CD4-positive, alpha-beta T cell (primary cell): ENCODE measurements at regions of chr3 and their contacts with region 1.

Region 1: GRCh38 chr3:114213627-114214541 is 23.5 kb downstream of the ZNF80 start:
- DNase-seq: peak; percentile 53 to 91 (median 64)
- ATAC-seq: peak; percentile 51
- H3K4me3 ChIP-seq: peak overlapping the region; percentile 59
- H3K4me3 Mint-ChIP-seq: no peak overlapping the region
- H3K27ac ChIP-seq: peak overlapping the region; percentile 93 to 94
- H3K27ac Mint-ChIP-seq: no peak overlapping the region
- H3K4me1 ChIP-seq: peaks cover 70% of the 10 kb centered on the region
- H3K4me1 Mint-ChIP-seq: no peaks in the 10 kb centered on the region
- H3K27me3 ChIP-seq: no peaks in the 10 kb centered on the region
- H3K27me3 Mint-ChIP-seq: no peaks in the 10 kb centered on the region
- CTCF ChIP-seq: peak; percentile 5

Region 2: GRCh38 chr3:114005481-114005880 is 208.4 kb before region 1 on chr3:
- CTCF ChIA-PET with region 1: no interaction called
- POLR2A ChIA-PET with region 1: no interaction called
- intact Hi-C with region 1: no loop called
- DNase-seq: peak in 2 of 14 experiments; percentile 8 to 15
- ATAC-seq: no peak
- H3K4me3 ChIP-seq: no peak overlapping the region
- H3K4me3 Mint-ChIP-seq: no peak overlapping the region
- H3K27ac ChIP-seq: no peak overlapping the region
- H3K27ac Mint-ChIP-seq: no peak overlapping the region
- H3K4me1 ChIP-seq: no peaks in the 10 kb centered on the region
- H3K4me1 Mint-ChIP-seq: no peaks in the 10 kb centered on the region
- H3K27me3 ChIP-seq: no peaks in the 10 kb centered on the region
- H3K27me3 Mint-ChIP-seq: no peaks in the 10 kb centered on the region
- CTCF ChIP-seq: no peak

Region 3: GRCh38 chr3:114056130-114057010 is 157.5 kb before region 1 on chr3 and contains the starts of genes CCDC191 and QTRT2:
- CTCF ChIA-PET with region 1: interaction called, 6 read pairs
- POLR2A ChIA-PET with region 1: no interaction called
- intact Hi-C with region 1: loop called in 1 of 2 experiments (anchors 10 kb)
- DNase-seq: peak; percentile 93 to 100 (median 97)
- ATAC-seq: peak; percentile 95
- H3K4me3 ChIP-seq: peak within 1 kb of the TSS; percentile 88
- H3K4me3 Mint-ChIP-seq: peak within 1 kb of the TSS; percentile 95
- H3K27ac ChIP-seq: peak within 1 kb of the TSS; percentile 87 to 96
- H3K27ac Mint-ChIP-seq: peak within 1 kb of the TSS; percentile 94
- H3K4me1 ChIP-seq: peaks cover 18% of the 10 kb centered on the region
- H3K4me1 Mint-ChIP-seq: peaks cover 53% of the 10 kb centered on the region
- H3K27me3 ChIP-seq: no peaks in the 10 kb centered on the region
- H3K27me3 Mint-ChIP-seq: no peaks in the 10 kb centered on the region
- CTCF ChIP-seq: no peak
- total RNA-seq, gene CCDC191: 3.6 to 3.7 TPM
- total RNA-seq, gene QTRT2: 22.8 to 27.0 TPM

Region 4: DNA sequence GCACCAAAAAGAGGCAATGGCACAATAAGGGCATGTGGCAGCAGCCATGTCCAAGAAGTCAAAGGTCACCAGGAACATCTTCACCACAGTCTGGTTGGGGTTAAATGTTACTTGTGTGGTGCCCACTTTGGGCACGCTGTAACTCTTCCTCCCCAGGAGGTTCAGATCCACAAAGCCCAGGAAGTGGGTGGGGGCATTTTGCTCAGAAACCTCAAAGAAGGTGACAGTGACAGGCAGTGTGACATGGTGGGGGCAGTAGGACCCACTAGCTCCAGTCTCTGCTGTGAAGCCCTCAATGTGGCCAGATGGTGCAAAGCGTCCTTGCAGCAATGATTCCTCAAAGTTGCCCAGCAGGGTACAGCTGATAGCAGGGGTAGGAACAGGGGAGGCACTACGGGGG is 17.7 kb after region 1 on chr3:
- CTCF ChIA-PET with region 1: interaction called, 7 read pairs
- POLR2A ChIA-PET with region 1: interaction called, 72 read pairs
- intact Hi-C with region 1: loop called in 1 of 2 experiments (anchors 2 kb)
- DNase-seq: peak in 11 of 14 experiments; percentile 20 to 89 (median 42)
- ATAC-seq: peak; percentile 89
- H3K4me3 ChIP-seq: no peak overlapping the region
- H3K4me3 Mint-ChIP-seq: peak overlapping the region; percentile 65
- H3K27ac ChIP-seq: peak overlapping the region; percentile 49 to 67
- H3K27ac Mint-ChIP-seq: peak overlapping the region; percentile 92
- H3K4me1 ChIP-seq: peaks cover 57% of the 10 kb centered on the region
- H3K4me1 Mint-ChIP-seq: peaks cover 84% of the 10 kb centered on the region
- H3K27me3 ChIP-seq: no peaks in the 10 kb centered on the region
- H3K27me3 Mint-ChIP-seq: no peaks in the 10 kb centered on the region
- CTCF ChIP-seq: no peak

Region 5: DNA sequence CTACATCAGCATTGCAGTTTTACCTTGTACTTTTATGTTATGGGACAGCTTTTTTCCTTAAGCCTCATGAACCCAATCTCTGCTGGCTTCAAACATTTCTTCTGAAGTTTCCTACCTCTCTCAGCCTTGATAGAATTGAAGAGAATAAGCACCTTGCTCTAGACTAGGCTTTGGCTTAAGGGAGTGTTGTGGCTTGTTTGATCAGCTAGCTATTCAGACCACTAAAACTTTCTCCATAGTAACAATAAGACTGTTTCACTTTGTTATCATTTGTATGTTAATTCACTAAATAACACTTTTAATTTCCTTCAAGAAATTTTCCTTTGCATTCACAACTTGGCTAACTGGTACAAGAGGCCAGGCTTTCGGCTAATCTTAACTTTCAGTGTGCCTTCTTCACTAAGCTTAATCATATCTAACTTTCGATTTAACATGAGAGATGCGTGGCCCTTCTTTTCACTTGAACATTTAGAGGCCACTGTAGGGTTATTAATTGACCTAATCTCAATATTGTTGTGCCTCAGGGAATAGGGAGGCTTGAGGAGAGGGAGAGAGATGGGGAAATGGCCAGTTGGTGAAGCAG is 71.9 kb after region 1 on chr3:
- CTCF ChIA-PET with region 1: interaction called, 28 read pairs
- POLR2A ChIA-PET with region 1: interaction called, 33 read pairs
- intact Hi-C with region 1: loop called (anchors 2 to 5 kb)
- DNase-seq: peak in 3 of 14 experiments; percentile 24 to 50 (median 45)
- ATAC-seq: peak; percentile 54
- H3K4me3 ChIP-seq: peak overlapping the region; percentile 25
- H3K4me3 Mint-ChIP-seq: peak overlapping the region; percentile 69
- H3K27ac ChIP-seq: peak overlapping the region in 1 of 2 donors; percentile 63
- H3K27ac Mint-ChIP-seq: peak overlapping the region; percentile 85
- H3K4me1 ChIP-seq: peaks cover 12% of the 10 kb centered on the region
- H3K4me1 Mint-ChIP-seq: peaks cover 18% of the 10 kb centered on the region
- H3K27me3 ChIP-seq: no peaks in the 10 kb centered on the region
- H3K27me3 Mint-ChIP-seq: no peaks in the 10 kb centered on the region
- CTCF ChIP-seq: no peak

Region 6: DNA sequence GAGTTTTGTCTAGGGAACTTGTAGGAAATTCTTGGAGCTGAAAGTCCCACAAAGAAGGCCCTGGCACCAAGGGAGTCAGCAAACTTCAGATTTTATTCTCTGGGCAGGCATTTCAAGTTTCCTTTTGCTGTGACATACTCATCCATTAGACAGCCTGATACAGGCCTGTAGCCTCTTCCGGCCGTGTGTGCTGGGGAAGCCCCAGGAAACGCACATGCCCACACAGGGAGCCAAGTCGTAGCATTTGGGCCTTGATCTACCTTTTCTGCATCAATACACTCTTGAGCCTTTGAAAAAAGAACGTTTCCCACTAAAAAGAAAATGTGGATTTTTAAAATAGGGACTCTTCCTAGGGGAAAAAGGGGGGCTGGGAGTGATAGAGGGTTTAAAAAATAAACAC is 94.9 kb after region 1 on chr3:
- CTCF ChIA-PET with region 1: no interaction called
- POLR2A ChIA-PET with region 1: interaction called, 24 read pairs
- intact Hi-C with region 1: no loop called
- DNase-seq: peak; percentile 28 to 89 (median 50)
- ATAC-seq: peak; percentile 92
- H3K4me3 ChIP-seq: peak overlapping the region; percentile 18
- H3K4me3 Mint-ChIP-seq: peak overlapping the region; percentile 14
- H3K27ac ChIP-seq: peak overlapping the region; percentile 51 to 81
- H3K27ac Mint-ChIP-seq: peak overlapping the region; percentile 75
- H3K4me1 ChIP-seq: peaks cover 56% of the 10 kb centered on the region
- H3K4me1 Mint-ChIP-seq: peaks cover 42% of the 10 kb centered on the region
- H3K27me3 ChIP-seq: no peaks in the 10 kb centered on the region
- H3K27me3 Mint-ChIP-seq: no peaks in the 10 kb centered on the region
- CTCF ChIP-seq: no peak

Region 7: DNA sequence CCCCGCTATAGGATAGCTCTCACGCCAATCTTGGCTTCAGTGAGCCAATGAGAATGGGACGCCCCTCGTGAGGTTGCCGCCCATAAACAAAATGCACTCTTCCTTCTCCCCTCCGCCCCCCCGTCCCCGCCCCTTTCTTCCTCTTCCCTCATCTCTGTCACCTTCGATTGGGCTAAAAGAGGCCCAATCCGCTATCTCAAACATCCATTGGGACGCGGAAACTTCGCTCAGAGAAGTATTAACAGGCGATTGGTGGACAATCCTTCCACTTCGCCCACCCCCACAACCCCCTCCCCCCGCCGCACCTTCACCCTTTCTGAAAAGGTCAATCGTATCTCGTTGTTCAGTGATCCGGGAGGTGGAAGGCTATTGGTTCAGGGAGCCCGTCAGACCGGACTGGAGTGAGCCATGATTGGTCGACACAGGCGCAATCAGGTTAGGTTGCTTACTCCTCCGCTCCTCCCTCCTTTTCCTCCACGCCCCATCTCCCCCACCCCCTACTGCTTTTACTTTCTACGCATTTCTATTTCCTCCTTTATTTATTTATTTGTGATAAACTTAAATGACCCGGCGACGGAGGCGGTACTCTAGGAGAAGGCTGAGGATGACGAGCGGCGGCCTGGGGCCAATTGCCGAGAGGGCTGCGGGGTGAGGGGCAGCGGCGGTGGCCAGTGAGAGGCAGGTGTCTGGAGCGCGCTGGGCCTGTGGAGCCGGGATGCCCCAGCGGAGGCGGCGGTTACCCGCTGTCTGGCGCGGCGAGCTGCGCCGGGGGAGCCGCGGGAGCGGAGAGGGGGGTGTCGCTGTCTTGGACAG is 933.7 kb after region 1 on chr3:
- CTCF ChIA-PET with region 1: no interaction called
- POLR2A ChIA-PET with region 1: interaction called, 21 read pairs
- intact Hi-C with region 1: loop called in 1 of 2 experiments (anchors 2 kb)
- DNase-seq: peak; percentile 89 to 99 (median 96)
- ATAC-seq: peak; percentile 72
- H3K4me3 ChIP-seq: peak overlapping the region; percentile 90
- H3K4me3 Mint-ChIP-seq: peak overlapping the region; percentile 94
- H3K27ac ChIP-seq: peak overlapping the region; percentile 91 to 97
- H3K27ac Mint-ChIP-seq: peak overlapping the region; percentile 94
- H3K4me1 ChIP-seq: peaks cover 14% of the 10 kb centered on the region
- H3K4me1 Mint-ChIP-seq: peaks cover 31% of the 10 kb centered on the region
- H3K27me3 ChIP-seq: no peaks in the 10 kb centered on the region
- H3K27me3 Mint-ChIP-seq: no peaks in the 10 kb centered on the region
- CTCF ChIP-seq: no peak